Vagina (tissue), 2 donors: ENCODE measurements at regions of chr3 and their contacts with region 1.

Region 1: DNA sequence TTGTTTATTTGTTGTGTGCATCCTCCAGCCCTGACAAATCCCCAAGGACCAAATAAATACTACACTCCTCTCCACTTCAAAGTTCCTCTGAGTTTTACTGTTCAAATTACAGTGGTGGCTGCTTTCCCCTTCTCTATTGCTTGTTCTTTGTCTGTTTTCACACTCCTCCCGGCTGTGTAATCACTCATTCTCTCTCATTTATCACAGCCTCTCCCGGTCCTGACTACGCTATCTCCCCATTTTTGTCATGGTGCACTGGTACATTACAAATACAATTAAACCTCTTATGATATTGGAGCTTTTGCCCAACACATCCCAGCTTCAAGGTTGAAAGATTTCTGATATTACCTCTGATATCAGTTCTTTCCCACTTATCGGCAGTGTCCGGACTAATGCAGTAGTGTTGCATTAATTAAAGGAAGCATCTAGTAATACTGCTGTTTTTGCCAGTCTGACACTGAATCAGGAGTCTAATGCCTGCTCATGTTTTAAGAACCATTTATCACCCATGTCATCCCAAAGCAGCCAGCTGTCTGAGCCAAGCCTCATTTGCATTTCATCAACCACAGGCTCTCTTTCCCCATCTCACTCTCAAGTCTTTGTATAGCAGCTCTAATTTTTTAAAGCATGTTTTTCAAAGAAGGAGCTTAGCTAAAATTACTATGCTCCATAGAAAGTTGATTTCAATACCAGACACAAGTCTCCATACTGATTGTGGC is 740.5 kb downstream of the ROBO2 start:
- DNase-seq: no peak
- H3K4me3 ChIP-seq: no peak overlapping the region
- H3K27ac ChIP-seq: no peak overlapping the region
- H3K4me1 ChIP-seq: no peaks in the 10 kb centered on the region
- H3K27me3 ChIP-seq: no peaks in the 10 kb centered on the region
- CTCF ChIP-seq: no peak
- POLR2A ChIP-seq: no peak

Region 2: DNA sequence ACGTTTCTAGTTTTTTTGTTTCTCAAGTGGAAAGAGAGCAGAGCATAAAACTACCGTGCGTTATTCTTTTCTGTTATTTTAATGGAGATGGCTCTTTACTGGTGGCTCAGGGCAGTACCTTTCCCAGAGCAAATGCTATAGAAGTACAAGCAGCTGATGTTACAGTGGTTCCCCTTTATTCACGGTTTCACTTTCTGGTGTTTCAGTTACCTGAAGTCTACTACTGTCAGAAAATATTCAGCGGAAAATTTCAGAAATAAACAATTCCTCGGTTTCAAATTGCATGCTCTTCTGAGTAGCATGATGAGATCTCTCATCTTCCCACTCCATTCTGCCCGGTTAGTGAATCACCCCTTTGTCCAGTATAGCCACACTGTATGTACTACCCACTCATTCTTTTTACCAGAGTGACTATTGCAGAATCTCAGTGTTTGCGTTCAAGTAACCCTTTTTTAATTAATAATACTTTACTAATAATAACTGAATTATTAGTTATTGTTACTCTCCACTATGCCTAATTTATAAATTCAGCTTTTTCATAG is 1338.0 kb before region 1 on chr3:
- intact Hi-C with region 1: loop called (anchors 5 kb)
- DNase-seq: no peak
- H3K4me3 ChIP-seq: no peak overlapping the region
- H3K27ac ChIP-seq: no peak overlapping the region
- H3K4me1 ChIP-seq: no peaks in the 10 kb centered on the region
- H3K27me3 ChIP-seq: no peaks in the 10 kb centered on the region
- CTCF ChIP-seq: no peak
- POLR2A ChIP-seq: no peak

Region 3: GRCh38 chr3:78015856-78016255 is 235.4 kb after region 1 on chr3:
- intact Hi-C with region 1: no loop called
- DNase-seq: no peak
- H3K4me3 ChIP-seq: no peak overlapping the region
- H3K27ac ChIP-seq: no peak overlapping the region
- H3K4me1 ChIP-seq: no peaks in the 10 kb centered on the region
- H3K27me3 ChIP-seq: no peaks in the 10 kb centered on the region
- CTCF ChIP-seq: no peak
- POLR2A ChIP-seq: no peak